Activated CD4-positive, alpha-beta T cell treated with anti-CD3 and anti-CD28 coated beads, Interleukin-2, amount 10 ng/mL, durations not matched to agents 24 days and 14 days (primary cell): ENCODE measurements at regions of chr10 and their contacts with region 1.

Region 1: DNA sequence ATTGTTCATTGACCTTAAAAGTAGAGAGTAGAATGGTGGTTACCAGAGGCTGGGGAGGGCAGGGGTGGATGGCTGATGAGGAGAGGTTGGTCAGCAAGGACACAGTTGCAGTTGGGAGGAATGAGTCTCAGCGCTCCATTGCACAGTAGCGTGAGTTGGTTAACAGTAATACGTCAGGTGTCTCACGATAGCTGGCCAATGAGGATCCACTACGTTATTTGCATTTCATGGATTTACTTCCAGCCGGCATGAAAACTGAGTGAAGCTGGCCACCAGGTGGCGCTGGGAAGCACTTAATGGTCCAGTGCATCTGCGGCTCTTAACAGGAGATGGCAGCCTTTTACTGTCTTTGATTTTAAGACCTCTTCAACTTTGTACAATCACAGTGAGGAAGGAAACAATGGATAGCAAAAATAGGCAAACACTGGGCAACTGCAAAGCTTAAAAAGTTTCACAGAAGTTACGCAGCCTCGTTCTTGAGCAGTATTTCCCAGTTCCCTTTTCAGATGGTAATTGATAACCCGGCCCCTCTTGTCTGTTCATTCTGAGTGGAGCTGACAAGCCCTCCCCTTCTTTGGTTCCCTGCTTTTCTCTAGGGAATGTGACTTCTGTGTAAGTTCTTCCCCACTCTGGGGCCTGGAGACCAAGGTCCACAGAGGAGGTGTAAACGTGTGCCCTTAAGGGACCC is 23.7 kb downstream of the AKR1E2 start:
- DNase-seq: peak; percentile 96
- H3K4me3 Mint-ChIP-seq: peak overlapping the region; percentile 20
- H3K27ac Mint-ChIP-seq: peak overlapping the region; percentile 27
- H3K4me1 Mint-ChIP-seq: peaks cover 11% of the 10 kb centered on the region
- H3K27me3 Mint-ChIP-seq: no peaks in the 10 kb centered on the region

Region 2: GRCh38 chr10:4981722-4982471 is 132.2 kb after region 1 on chr10:
- intact Hi-C with region 1: loop called (anchors 1 kb)
- DNase-seq: no peak
- H3K4me3 Mint-ChIP-seq: no peak overlapping the region
- H3K27ac Mint-ChIP-seq: no peak overlapping the region
- H3K4me1 Mint-ChIP-seq: no peaks in the 10 kb centered on the region
- H3K27me3 Mint-ChIP-seq: no peaks in the 10 kb centered on the region

Region 3: GRCh38 chr10:5283305-5284158 is 433.8 kb after region 1 on chr10:
- intact Hi-C with region 1: loop called (anchors 1 kb)
- DNase-seq: peak; percentile 89
- H3K4me3 Mint-ChIP-seq: peak overlapping the region; percentile 44
- H3K27ac Mint-ChIP-seq: peak overlapping the region; percentile 82
- H3K4me1 Mint-ChIP-seq: peaks cover 29% of the 10 kb centered on the region
- H3K27me3 Mint-ChIP-seq: peaks cover 5% of the 10 kb centered on the region

Region 4: GRCh38 chr10:5434017-5434753 is 584.5 kb after region 1 on chr10:
- intact Hi-C with region 1: loop called (anchors 1 kb)
- DNase-seq: peak; percentile 73
- H3K4me3 Mint-ChIP-seq: peak overlapping the region; percentile 10
- H3K27ac Mint-ChIP-seq: peak overlapping the region; percentile 70
- H3K4me1 Mint-ChIP-seq: peaks cover 15% of the 10 kb centered on the region
- H3K27me3 Mint-ChIP-seq: no peaks in the 10 kb centered on the region